IMR-90 (cell line): ENCODE measurements at regions of chr12 and their contacts with region 1.

Region 1: GRCh38 chr12:131699434-131699833 is 11.5 kb upstream of the SFSWAP start:
- DNase-seq: no peak
- ATAC-seq: no peak
- H3K4me3 ChIP-seq: no peak overlapping the region
- H3K27ac ChIP-seq: no peak overlapping the region
- H3K4me1 ChIP-seq: no peaks in the 10 kb centered on the region
- H3K27me3 ChIP-seq: no peaks in the 10 kb centered on the region
- CTCF ChIP-seq: no peak
- POLR2A ChIP-seq: no peak
- RAD21 ChIP-seq: no peak

Region 2: DNA sequence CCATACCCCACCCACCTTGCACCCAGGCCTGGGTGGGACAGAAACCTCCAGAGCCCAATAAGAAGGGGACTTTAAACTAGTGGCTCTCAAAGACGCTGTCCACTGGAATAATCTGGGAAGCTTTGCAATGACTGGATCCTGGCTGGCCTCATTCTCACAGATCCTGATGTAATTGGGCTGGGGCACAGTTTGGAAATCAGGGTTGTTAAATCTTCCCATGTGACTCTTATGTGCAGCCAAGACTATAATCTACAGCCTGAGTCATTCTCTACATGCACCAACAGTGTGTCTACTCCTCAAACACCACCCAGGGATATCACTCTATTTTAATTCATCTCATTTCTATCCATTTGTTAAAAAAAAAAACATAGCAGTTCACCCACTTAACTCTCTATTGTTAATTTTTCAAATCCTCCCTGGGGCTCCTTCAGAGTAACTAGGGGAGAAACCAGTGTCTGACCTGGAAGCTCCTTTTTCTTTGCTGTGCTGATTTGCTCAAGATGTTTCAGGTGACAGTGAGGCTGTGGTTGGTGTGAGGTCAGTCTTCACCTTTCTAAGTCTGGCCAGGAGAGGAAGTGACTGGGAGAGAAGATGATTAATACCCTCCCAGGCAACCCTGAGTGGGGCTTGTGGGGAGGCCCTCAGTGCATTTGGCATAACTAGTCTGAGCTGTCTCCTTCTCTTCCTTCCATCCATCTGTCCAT is 200.1 kb before region 1 on chr12:
- CTCF ChIA-PET with region 1: no interaction called
- POLR2A ChIA-PET with region 1: no interaction called
- dilution Hi-C with region 1: no loop called
- in situ Hi-C with region 1: no loop called
- intact Hi-C with region 1: no loop called
- DNase-seq: no peak
- ATAC-seq: no peak
- H3K4me3 ChIP-seq: no peak overlapping the region
- H3K27ac ChIP-seq: no peak overlapping the region
- H3K4me1 ChIP-seq: no peaks in the 10 kb centered on the region
- H3K27me3 ChIP-seq: no peaks in the 10 kb centered on the region
- CTCF ChIP-seq: no peak
- POLR2A ChIP-seq: no peak
- RAD21 ChIP-seq: no peak

Region 3: DNA sequence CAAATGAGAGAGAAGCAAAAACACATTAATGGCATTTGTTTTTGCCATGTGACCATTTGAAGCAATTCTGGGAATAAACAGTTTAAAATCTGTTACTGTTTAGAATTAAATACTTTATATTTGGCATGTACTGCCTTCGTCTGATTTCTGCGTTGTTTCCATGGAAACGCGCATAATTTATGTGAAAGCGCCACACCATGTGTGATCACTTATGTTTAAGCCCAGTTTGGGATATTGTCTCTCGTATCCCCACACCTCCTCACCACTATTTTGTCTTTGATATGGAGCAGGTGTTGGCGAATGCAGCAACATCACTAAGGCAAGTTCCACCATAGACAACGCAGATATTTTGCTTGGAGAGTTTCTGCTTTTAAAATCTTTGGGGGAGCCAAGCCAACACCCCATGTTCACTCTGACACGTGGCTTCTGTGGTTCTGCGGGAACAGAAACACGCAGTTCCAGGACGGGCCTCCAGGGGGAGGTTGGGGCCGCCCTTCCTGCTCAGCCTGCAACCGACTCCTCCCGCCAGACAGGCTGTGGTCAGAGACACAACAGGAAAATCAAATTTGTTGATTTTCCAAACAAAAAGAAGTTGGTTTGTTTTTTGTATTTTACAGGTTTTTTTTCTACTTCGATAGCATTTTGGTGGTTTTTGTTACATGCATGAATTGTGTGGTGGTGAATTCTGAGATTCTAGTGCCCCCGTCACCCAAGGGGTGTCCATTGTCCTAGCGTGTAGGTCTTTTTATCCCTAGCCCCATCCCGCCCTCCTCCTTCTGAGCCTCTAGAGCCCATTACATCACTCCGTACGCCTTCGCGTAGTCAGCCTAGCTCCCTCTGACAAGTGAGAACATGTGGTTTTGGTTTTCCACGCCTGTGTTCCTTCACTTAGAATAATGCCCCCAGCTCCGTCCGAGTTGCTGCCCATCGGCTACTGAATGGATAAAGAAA is 90.4 kb before region 1 on chr12:
- CTCF ChIA-PET with region 1: no interaction called
- POLR2A ChIA-PET with region 1: no interaction called
- dilution Hi-C with region 1: no loop called
- in situ Hi-C with region 1: no loop called
- intact Hi-C with region 1: loop called (anchors 10 kb)
- DNase-seq: peak; percentile 7
- ATAC-seq: peak; percentile 79
- H3K4me3 ChIP-seq: no peak overlapping the region
- H3K27ac ChIP-seq: no peak overlapping the region
- H3K4me1 ChIP-seq: no peaks in the 10 kb centered on the region
- H3K27me3 ChIP-seq: no peaks in the 10 kb centered on the region
- CTCF ChIP-seq: peak; percentile 47
- POLR2A ChIP-seq: no peak
- RAD21 ChIP-seq: peak; percentile 35; the same call in 1 of the 2 replicates

Region 4: DNA sequence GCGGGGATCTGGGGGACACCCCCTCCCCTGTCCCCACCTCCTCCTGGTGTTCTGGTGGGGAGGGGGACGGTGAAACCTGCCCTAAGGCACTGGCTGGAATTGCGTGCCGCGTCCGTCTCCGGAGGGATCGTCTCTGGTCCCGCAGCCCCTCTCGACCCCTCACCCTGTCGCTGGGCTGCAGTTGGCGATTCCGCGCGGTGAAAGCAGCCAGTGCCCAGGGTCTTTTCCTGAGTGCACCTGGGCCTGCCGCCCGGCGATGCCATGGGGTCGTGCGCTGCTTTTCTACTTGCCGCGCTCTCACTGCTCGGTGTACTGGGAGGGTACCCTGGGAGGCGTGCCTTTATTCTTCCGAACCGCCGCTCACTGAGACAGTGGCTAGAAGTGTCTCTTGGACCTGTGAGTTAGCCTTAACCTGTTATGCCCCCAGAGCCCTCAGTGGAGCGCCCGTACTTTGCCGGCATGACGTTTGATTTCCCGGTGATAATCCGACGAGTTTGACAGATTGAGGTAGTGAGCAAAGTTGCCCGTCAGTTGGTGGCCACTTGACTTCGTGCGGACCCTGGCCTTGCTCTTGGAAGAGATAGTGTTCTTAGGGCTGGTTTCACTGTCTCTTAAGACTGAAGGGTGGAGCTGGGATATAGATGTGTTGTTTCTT is 12.2 kb after region 1 on chr12:
- CTCF ChIA-PET with region 1: no interaction called
- POLR2A ChIA-PET with region 1: no interaction called
- dilution Hi-C with region 1: no loop called
- in situ Hi-C with region 1: no loop called
- intact Hi-C with region 1: no loop called
- DNase-seq: no peak
- ATAC-seq: no peak
- H3K4me3 ChIP-seq: peak overlapping the region; percentile 86
- H3K27ac ChIP-seq: peak overlapping the region; percentile 89
- H3K4me1 ChIP-seq: peaks cover 5% of the 10 kb centered on the region
- H3K27me3 ChIP-seq: no peaks in the 10 kb centered on the region
- CTCF ChIP-seq: no peak
- POLR2A ChIP-seq: no peak
- RAD21 ChIP-seq: no peak

Region 5: DNA sequence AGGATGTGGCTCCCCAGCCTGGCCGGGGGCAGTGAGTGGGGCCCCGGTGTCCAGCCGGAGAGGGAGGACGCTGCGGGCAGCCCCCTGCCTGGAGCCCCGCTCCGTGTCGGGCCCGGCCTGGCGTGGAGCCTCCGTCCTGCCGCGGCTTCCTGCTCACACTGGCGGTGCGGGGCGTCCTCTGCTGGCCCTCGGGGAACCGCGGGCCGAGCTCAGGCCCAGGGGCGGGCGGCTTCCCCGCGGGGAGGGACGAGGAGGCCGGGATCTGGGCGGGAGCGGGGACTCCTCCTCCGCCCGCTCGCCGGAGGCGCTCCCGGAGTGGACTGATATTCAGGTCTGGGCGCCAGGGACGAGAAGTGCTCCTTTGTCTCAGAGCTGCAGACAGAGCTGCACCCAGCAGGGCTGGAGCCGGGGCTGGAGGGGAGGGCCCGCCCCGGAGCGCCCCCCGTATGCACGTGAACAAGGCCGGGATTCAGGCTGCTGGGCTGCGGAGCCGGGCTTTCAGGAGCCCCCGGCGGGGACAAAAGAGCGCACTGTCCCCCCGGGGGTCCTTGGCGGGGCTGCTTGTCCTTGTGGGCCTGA is 131.0 kb after region 1 on chr12:
- CTCF ChIA-PET with region 1: no interaction called
- POLR2A ChIA-PET with region 1: no interaction called
- dilution Hi-C with region 1: no loop called
- in situ Hi-C with region 1: no loop called
- intact Hi-C with region 1: no loop called
- DNase-seq: peak; percentile 77
- ATAC-seq: peak; percentile 86
- H3K4me3 ChIP-seq: peak overlapping the region; percentile 38
- H3K27ac ChIP-seq: no peak overlapping the region
- H3K4me1 ChIP-seq: peaks cover 9% of the 10 kb centered on the region; the same call in 1 of the 2 replicates
- H3K27me3 ChIP-seq: no peaks in the 10 kb centered on the region; the same call in 1 of the 2 replicates
- CTCF ChIP-seq: peak; percentile 81
- POLR2A ChIP-seq: peak; percentile 23; the same call in 1 of the 2 replicates
- RAD21 ChIP-seq: peak; percentile 85